Esophagus squamous epithelium (tissue), 5 donors: ENCODE measurements at regions of chr4 and their contacts with region 1.

Region 1: DNA sequence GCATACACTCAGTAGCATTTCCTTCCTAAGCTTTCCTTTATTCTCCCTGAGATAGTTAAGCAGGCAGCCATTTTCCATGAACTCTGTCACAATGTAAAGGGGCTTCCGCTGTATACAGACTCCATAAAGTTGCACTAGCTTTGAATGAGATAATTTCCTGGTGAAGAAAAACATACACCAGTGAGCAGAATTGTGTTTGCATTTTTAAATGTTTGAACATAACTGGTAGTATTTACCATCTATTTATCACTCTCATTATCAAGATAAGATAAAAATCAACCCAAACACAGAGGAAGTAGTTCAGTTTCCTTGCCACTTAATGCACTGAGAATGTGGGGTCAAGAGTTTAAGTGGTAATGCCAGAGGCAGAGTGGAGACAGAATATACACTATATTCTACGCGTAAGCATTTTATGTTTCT is 54.1 kb downstream of the TXK start:
- DNase-seq: no peak
- H3K4me3 ChIP-seq: no peak overlapping the region
- H3K27ac ChIP-seq: no peak overlapping the region
- H3K4me1 ChIP-seq: no peaks in the 10 kb centered on the region
- H3K27me3 ChIP-seq: no peaks in the 10 kb centered on the region
- CTCF ChIP-seq: no peak
- POLR2A ChIP-seq: no peak

Region 2: GRCh38 chr4:48008021-48008596 is 71.9 kb before region 1 on chr4:
- intact Hi-C with region 1: loop called (anchors 10 kb)
- DNase-seq: no peak
- H3K4me3 ChIP-seq: no peak overlapping the region
- H3K27ac ChIP-seq: no peak overlapping the region
- H3K4me1 ChIP-seq: peaks cover 0 to 5% (median 0%) of the 10 kb centered on the region in 3 donors
- H3K27me3 ChIP-seq: no peaks in the 10 kb centered on the region
- CTCF ChIP-seq: no peak
- POLR2A ChIP-seq: no peak